ENCODE measurements at regions of chr14 and their contacts with region 1.

Region 1: GRCh38 chr14:64387694-64388532 is at the start of gene MTHFD1:
- DNase-seq: peak; percentile 97
- ATAC-seq: peak; percentile 85
- H3K4me3 ChIP-seq: peak within 1 kb of the TSS; percentile 71 to 83
- H3K27ac ChIP-seq: peak within 1 kb of the TSS; percentile 63
- H3K4me1 ChIP-seq: peaks cover 9 to 23% of the 10 kb centered on the region in 2 experiments
- H3K27me3 ChIP-seq: no peaks in the 10 kb centered on the region
- CTCF ChIP-seq: no peak
- POLR2A ChIP-seq: peak; percentile 74
- RAD21 ChIP-seq: no peak
- total RNA-seq, gene MTHFD1: 153 TPM

Region 2: DNA sequence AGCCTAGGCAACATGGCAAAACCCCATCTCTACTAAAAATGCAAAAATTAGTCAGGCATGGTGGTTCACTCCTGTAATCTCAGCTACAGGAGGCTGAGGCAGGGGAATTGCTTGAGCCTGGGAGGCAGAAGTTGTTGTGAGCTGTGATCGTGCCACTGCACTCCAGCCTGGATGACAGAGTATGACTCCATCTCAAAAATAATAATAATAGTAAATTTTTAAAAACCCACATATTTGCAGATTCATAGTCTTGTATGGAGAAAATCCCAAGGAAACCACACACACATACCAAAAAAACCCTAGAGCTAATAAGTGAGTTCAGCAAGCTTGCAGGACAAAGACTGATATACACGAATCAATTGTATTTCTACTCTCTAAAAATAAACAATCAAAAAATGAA is 18.7 kb before region 1 on chr14:
- CTCF ChIA-PET with region 1: interaction called, 4 read pairs
- POLR2A ChIA-PET with region 1: interaction called, 17 read pairs
- RAD21 ChIA-PET with region 1: no interaction called
- intact Hi-C with region 1: no loop called
- DNase-seq: no peak
- ATAC-seq: no peak
- H3K4me3 ChIP-seq: no peak overlapping the region
- H3K27ac ChIP-seq: no peak overlapping the region
- H3K4me1 ChIP-seq: peaks cover 11 to 27% of the 10 kb centered on the region in 2 experiments; a peak in 3 of 4 replicates
- H3K27me3 ChIP-seq: no peaks in the 10 kb centered on the region
- CTCF ChIP-seq: no peak
- POLR2A ChIP-seq: no peak
- RAD21 ChIP-seq: no peak

Region 3: DNA sequence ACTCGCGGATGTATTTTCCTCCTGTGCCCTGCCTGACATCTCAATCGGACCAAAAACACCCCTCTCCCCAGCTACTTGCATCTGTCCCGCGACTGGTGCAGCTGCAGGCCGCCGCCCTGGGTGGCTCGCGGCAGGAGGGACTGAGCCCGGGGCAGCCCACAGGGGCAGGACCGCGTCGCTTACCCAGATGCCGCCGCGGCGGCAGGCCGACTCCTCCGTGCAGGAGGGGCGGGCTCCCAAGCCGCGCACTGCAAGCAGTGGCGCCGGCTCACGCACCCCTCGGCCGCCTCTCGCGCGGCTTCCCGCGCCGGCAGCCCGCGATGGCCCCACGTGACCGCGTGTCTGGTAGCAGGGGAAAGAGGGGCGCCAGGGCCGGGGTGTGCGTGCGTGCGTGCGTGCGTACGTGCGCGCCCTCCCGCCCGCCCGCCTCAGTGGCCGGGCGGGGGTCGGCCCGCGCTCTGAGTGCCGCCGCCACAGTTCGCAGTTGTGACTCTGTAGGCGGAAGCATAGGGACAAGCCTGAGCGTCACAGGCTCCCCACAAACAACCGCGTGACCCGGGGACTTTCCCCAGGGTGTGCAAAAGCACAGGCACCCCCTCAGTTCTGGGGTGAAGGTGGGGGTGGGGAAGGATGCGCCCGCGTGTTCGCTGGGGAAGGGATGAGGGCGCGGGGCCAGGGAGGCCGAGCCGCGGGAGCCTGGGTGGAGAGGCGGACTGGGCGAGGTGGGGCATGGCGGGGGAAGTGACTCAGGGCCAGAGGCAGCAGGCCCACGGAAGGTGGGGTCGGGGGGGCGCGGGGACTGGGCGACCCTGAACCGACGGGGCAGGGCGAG is 115.8 kb after region 1 on chr14 and contains the start of gene ZBTB25:
- CTCF ChIA-PET with region 1: no interaction called
- POLR2A ChIA-PET with region 1: interaction called, 4 read pairs
- RAD21 ChIA-PET with region 1: no interaction called
- intact Hi-C with region 1: loop called (anchors 1 kb)
- DNase-seq: peak; percentile 90
- ATAC-seq: peak; percentile 76
- H3K4me3 ChIP-seq: peak within 1 kb of the TSS; percentile 74 to 97
- H3K27ac ChIP-seq: peak within 1 kb of the TSS; percentile 95
- H3K4me1 ChIP-seq: peaks cover 30 to 51% of the 10 kb centered on the region in 2 experiments
- H3K27me3 ChIP-seq: no peaks in the 10 kb centered on the region
- CTCF ChIP-seq: no peak
- POLR2A ChIP-seq: peak; percentile 73
- RAD21 ChIP-seq: no peak
- total RNA-seq, gene ZBTB25: 19.0 TPM